Calu3 (cell line): ENCODE measurements at regions of chr5 and their contacts with region 1.

Region 1: DNA sequence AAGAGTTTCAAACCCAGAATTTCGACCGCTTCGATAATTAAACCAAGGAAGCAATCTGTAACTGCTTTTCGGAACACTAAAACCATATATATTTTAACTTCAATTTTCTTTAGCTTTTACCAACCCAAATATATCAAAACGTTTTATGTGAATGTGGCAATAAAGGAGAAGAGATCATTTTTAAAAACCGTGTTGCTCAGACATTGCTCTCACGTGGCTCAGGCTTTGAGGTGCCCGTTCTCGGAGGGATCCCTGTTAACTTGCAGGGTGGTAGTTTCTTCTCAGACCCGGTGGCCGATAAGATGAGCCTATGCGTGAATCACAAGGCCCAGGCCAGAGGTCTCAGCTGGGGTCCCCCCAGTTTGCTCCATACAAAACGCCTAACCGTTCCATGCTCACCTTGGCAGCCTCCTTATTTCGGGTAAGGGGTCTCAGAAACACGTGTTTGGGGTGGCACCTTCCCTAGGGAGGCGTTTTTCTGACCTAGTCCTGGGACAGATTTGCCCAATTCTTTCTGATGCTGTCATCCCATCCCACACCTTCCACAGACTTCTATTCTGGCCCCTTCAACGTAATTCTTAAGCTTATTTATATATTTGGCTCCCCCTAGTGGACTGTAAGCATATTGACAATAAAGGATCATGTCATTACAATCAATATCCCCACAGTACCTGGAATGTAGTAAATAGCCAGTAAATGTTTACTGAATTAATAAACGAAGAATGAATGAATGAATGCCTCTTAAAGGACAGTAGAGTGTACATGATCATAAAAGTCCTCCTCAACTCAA is 48.1 kb downstream of the THBS4 start:
- DNase-seq: peak; percentile 31
- H3K4me3 Mint-ChIP-seq: peak overlapping the region; percentile 56
- H3K27ac Mint-ChIP-seq: peak overlapping the region; percentile 8
- H3K4me1 Mint-ChIP-seq: peaks cover 29% of the 10 kb centered on the region
- H3K27me3 Mint-ChIP-seq: peaks cover 11% of the 10 kb centered on the region
- CTCF ChIP-seq: peak; percentile 21

Region 2: DNA sequence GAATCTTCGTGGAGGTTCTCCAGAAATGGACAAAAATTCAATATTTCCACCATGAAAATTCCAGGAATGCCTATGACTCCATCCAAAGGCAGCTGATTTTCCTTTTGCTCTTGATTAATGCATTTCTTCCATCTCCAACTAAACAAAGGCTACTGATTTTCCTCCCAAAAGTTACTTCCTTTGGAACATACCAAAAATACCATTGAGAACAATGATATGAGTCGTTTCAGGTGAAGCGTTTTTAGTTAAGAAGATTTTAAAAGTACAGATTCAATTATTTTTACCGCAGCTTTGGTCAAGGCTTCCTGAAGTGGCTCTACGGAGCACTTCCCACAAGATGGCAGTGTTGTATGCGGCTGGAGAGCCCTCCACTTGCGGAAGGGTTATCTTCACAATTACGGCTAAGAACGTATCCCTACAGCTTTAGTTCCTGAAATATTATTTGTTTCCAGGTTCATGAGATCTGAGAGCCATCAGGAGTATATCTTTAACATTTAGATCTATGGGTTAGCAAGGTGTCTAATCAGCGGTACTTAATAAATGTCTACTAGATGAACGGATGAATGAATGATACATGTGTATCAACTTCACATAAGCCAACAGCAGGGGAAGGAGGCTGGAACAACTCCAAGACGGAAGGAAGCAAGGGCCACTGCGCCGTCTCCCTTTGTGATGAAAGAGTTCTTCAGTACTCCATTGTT is 1062.3 kb before region 1 on chr5:
- CTCF ChIA-PET with region 1: interaction called, 15 read pairs
- intact Hi-C with region 1: loop called (anchors 1 kb)
- DNase-seq: peak; percentile 73
- H3K4me3 Mint-ChIP-seq: peak overlapping the region; percentile 48
- H3K27ac Mint-ChIP-seq: no peak overlapping the region
- H3K4me1 Mint-ChIP-seq: peaks cover 23% of the 10 kb centered on the region
- H3K27me3 Mint-ChIP-seq: no peaks in the 10 kb centered on the region
- CTCF ChIP-seq: peak; percentile 86

Region 3: DNA sequence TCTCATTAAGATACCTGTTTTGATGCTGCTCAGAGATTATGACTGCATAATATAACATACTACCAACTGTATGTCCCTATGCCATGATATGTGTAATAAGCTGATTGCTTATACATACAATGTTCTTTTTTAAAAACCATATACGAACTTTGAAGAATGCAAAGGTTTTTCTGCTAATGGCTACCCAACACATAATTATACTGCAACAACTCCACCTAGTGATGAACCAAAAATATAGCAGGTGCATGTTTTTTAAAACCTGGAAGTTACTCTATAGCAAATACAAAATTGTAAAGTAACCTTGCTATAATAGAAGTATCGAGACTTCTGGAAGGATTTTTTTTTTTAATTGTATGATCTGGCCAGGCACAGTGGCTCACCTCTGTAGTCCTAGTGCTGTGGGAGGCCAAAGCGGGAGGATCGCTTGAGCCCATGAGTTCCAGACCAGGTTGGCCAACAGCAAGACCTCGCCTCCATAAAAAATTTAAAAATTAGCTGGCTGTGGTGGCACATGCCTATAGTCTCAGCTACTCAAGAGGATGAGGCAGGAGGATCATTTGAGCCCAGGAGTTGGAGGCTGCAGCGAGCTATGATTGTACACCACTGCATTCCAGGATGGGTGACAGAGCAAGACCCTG is 618.5 kb before region 1 on chr5:
- CTCF ChIA-PET with region 1: no interaction called
- intact Hi-C with region 1: no loop called
- DNase-seq: no peak
- H3K4me3 Mint-ChIP-seq: no peak overlapping the region
- H3K27ac Mint-ChIP-seq: no peak overlapping the region
- H3K4me1 Mint-ChIP-seq: no peaks in the 10 kb centered on the region
- H3K27me3 Mint-ChIP-seq: no peaks in the 10 kb centered on the region
- CTCF ChIP-seq: peak; percentile 68

Region 4: GRCh38 chr5:79702606-79703382 is 380.5 kb before region 1 on chr5:
- CTCF ChIA-PET with region 1: interaction called, 5 read pairs
- intact Hi-C with region 1: loop called (anchors 2 kb)
- DNase-seq: peak; percentile 74
- H3K4me3 Mint-ChIP-seq: no peak overlapping the region
- H3K27ac Mint-ChIP-seq: peak overlapping the region; percentile 60
- H3K4me1 Mint-ChIP-seq: peaks cover 71% of the 10 kb centered on the region
- H3K27me3 Mint-ChIP-seq: no peaks in the 10 kb centered on the region
- CTCF ChIP-seq: peak; percentile 82

Region 5: GRCh38 chr5:79878721-79879336 is 204.5 kb before region 1 on chr5:
- CTCF ChIA-PET with region 1: interaction called, 12 read pairs
- intact Hi-C with region 1: loop called (anchors 5 kb)
- DNase-seq: peak; percentile 42
- H3K4me3 Mint-ChIP-seq: no peak overlapping the region
- H3K27ac Mint-ChIP-seq: no peak overlapping the region
- H3K4me1 Mint-ChIP-seq: no peaks in the 10 kb centered on the region
- H3K27me3 Mint-ChIP-seq: peaks cover 56% of the 10 kb centered on the region
- CTCF ChIP-seq: peak; percentile 51

Region 6: DNA sequence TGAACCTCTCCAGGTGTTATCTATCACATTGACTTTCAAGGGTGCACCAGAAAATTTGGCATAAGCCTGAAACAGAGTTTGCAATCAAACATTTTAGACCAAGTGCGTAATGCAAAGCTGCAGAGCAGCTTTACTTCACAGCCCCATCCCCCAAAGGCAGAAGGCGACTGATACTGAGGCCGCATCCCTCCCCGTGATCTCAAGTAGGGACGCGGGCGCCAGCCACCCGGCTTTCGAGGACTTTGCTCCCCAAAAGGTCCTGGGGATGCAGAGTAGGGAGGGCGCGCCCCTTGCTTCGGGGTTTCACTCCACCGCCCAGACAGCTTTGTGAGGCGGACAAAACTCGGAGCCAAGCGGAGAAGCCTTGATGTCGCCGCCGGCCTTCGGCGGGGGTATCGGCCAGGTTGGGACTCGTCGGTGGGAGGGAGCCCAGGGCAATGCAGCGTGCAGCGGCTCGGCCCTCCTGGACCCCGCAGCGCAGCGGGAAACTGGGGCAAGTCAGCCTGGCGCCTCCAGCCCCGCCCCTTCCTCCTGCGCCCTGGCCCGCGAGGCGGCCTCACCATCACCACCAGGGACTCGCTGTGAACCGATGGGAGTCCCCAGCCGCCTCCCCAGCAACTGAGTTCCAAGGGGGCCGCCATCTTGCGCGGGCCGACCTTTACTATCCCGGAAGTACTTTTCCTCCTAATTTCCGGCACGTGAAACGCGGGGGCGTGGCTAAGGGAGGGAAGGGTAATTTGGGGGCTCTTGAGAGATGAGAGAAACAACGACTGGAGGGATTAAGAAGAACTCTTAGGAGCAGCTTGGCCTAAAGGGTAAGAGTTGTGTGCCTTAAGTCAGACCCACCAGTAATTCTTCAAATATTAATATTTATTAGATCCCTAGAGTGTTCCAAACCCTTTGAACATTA is 92.4 kb before region 1 on chr5 and contains the start of gene MTX3:
- CTCF ChIA-PET with region 1: no interaction called
- intact Hi-C with region 1: loop called (anchors 1 kb)
- DNase-seq: peak; percentile 92
- H3K4me3 Mint-ChIP-seq: peak within 1 kb of the TSS; percentile 76
- H3K27ac Mint-ChIP-seq: peak within 1 kb of the TSS; percentile 82
- H3K4me1 Mint-ChIP-seq: peaks cover 9% of the 10 kb centered on the region
- H3K27me3 Mint-ChIP-seq: no peaks in the 10 kb centered on the region
- CTCF ChIP-seq: no peak
- total RNA-seq, gene MTX3: 17.5 and 22.7 TPM in 2 replicates

Region 7: DNA sequence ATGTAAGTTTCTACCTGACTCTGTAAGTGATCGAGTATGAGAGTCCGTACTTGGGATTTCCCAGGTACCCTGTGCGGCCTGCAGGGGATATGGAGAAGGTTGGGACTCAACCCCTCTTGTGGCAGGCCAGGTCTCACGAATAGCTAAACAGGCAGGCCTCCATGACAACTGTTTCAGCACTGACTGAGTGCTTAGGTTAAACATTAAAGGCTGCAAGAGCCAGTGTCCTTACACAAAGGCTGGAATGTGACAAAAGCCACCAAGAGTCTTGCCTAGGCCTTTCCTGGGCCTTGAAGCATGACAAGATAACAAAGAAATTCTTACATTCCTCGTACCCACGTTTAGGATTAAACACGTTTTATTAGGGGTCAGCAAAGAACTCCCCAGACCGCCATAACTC is 10.5 kb after region 1 on chr5:
- CTCF ChIA-PET with region 1: interaction called, 11 read pairs
- intact Hi-C with region 1: no loop called
- DNase-seq: peak; percentile 39
- H3K4me3 Mint-ChIP-seq: no peak overlapping the region
- H3K27ac Mint-ChIP-seq: no peak overlapping the region
- H3K4me1 Mint-ChIP-seq: no peaks in the 10 kb centered on the region
- H3K27me3 Mint-ChIP-seq: no peaks in the 10 kb centered on the region
- CTCF ChIP-seq: no peak

Region 8: GRCh38 chr5:80125962-80126480 is 42.7 kb after region 1 on chr5:
- CTCF ChIA-PET with region 1: no interaction called
- intact Hi-C with region 1: no loop called
- DNase-seq: no peak
- H3K4me3 Mint-ChIP-seq: no peak overlapping the region
- H3K27ac Mint-ChIP-seq: no peak overlapping the region
- H3K4me1 Mint-ChIP-seq: peaks cover 12% of the 10 kb centered on the region
- H3K27me3 Mint-ChIP-seq: no peaks in the 10 kb centered on the region
- CTCF ChIP-seq: no peak

Region 9: GRCh38 chr5:80474929-80475328 is 391.6 kb after region 1 on chr5:
- CTCF ChIA-PET with region 1: no interaction called
- intact Hi-C with region 1: no loop called
- DNase-seq: no peak
- H3K4me3 Mint-ChIP-seq: no peak overlapping the region
- H3K27ac Mint-ChIP-seq: no peak overlapping the region
- H3K4me1 Mint-ChIP-seq: no peaks in the 10 kb centered on the region
- H3K27me3 Mint-ChIP-seq: no peaks in the 10 kb centered on the region
- CTCF ChIP-seq: no peak